Activated CD4-positive, alpha-beta memory T cell treated with anti-CD3 and anti-CD28 coated beads, Interleukin-2, amount 10 ng/mL, durations not matched to agents 7 days and 5 days (primary cell): ENCODE measurements at regions of chr3 and their contacts with region 1.

Region 1: GRCh38 chr3:40452876-40453730 is 4.0 kb upstream of the RPL14 start:
- DNase-seq: peak; percentile 97
- H3K4me3 Mint-ChIP-seq: peak overlapping the region; percentile 86
- H3K27ac Mint-ChIP-seq: peak overlapping the region; percentile 93
- H3K4me1 Mint-ChIP-seq: peaks cover 50% of the 10 kb centered on the region
- H3K27me3 Mint-ChIP-seq: no peaks in the 10 kb centered on the region

Region 2: DNA sequence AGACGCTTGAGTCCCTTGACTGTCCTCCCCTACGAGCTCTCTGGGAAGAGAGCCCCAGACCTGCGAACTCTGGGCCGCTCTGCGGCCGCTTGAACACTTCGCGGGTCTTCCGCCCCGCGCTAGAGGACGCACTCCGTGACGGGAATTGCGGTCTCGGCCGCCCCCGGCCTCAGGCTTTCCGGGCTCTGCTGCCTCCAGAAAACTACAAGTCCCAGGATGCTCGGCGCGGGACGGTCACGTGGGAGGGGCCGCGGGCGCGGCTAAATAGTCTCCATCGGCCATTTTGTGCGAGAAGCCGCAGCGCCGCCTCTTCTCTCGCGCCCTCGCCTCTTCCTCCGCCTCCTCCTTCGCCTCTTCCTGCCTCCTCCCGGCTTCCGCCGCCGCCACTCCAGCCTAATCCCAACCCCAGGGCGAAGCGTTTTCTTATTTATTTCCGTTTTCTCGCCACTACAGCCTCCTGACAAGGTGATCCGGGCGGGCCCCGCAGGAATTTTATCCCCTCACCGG is 143.6 kb before region 1 on chr3 and contains the start of gene EIF1B:
- CTCF ChIA-PET with region 1: interaction called, 4 read pairs
- POLR2A ChIA-PET with region 1: interaction called, 17 read pairs
- DNase-seq: peak; percentile 98
- H3K4me3 Mint-ChIP-seq: peak within 1 kb of the TSS; percentile 98
- H3K27ac Mint-ChIP-seq: peak within 1 kb of the TSS; percentile 94
- H3K4me1 Mint-ChIP-seq: peaks cover 28% of the 10 kb centered on the region
- H3K27me3 Mint-ChIP-seq: no peaks in the 10 kb centered on the region
- total RNA-seq, gene EIF1B: 39.2 to 41.9 TPM

Region 3: GRCh38 chr3:40464339-40465110 is 11.4 kb after region 1 on chr3:
- CTCF ChIA-PET with region 1: interaction called, 3 read pairs
- POLR2A ChIA-PET with region 1: interaction called, 19 read pairs
- DNase-seq: no peak
- H3K4me3 Mint-ChIP-seq: no peak overlapping the region
- H3K27ac Mint-ChIP-seq: peak overlapping the region; percentile 71
- H3K4me1 Mint-ChIP-seq: peaks cover 45% of the 10 kb centered on the region
- H3K27me3 Mint-ChIP-seq: no peaks in the 10 kb centered on the region

Region 4: DNA sequence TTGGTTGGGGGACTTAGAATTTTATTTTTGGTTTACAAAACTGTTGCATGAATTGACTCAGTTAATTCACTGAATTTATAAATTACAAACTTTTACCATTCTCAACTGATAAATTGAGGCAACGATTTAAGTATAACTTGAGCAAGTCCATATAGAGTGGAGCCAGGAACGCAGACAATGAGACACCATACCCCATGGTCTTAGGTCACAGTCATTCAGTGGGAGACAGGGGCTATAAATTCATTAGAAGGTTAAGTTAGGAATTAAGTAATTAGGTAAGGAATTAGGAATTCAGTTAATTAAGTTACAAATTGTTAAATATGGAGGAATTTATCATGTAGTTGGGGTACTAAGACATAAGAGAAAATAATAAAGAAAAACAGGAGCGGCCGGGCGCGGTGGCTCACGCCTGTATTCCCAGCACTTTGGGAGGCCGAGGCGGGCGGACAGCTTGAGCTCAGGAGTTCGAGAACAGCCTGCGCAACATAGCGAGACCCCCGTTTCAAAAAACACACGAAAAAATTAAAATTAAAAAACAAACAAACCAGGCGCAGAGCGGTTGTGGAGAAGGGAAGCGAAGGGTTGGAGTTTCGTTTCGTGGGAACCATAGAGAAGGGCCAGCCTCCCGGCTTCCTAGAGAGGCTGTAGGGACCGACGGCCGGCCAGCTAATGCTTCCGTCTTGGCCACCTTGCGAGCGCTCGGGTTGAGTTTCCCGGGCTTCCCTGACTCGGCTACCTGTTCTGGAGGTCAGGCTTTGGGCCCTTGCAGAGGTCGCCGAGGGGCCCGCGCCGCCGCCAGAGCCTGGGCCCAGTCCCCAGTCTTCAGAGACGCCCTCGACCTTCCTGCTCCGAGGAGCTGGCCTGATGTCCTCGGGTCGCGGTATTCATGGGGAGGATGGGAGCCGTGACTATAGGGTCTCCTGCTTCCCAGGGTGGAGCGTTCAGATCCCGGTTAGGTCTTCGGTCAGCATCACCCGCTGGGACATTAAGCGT is 23.7 kb after region 1 on chr3 and contains the start of gene ZNF619:
- CTCF ChIA-PET with region 1: interaction called, 4 read pairs
- POLR2A ChIA-PET with region 1: interaction called, 29 read pairs
- DNase-seq: peak; percentile 66
- H3K4me3 Mint-ChIP-seq: peak within 1 kb of the TSS; percentile 81
- H3K27ac Mint-ChIP-seq: peak within 1 kb of the TSS; percentile 63
- H3K4me1 Mint-ChIP-seq: peaks cover 25% of the 10 kb centered on the region
- H3K27me3 Mint-ChIP-seq: no peaks in the 10 kb centered on the region
- total RNA-seq, gene ZNF619: 10.5 to 10.6 TPM

Region 5: GRCh38 chr3:40505599-40506462 is 52.7 kb after region 1 on chr3 and contains the start of gene ZNF620:
- CTCF ChIA-PET with region 1: interaction called, 5 read pairs
- POLR2A ChIA-PET with region 1: interaction called, 14 read pairs
- DNase-seq: peak; percentile 48
- H3K4me3 Mint-ChIP-seq: peak within 1 kb of the TSS; percentile 94
- H3K27ac Mint-ChIP-seq: peak within 1 kb of the TSS; percentile 69
- H3K4me1 Mint-ChIP-seq: peaks cover 34% of the 10 kb centered on the region
- H3K27me3 Mint-ChIP-seq: peaks cover 3% of the 10 kb centered on the region
- total RNA-seq, gene ZNF620: 6.1 to 6.3 TPM

Region 6: GRCh38 chr3:40524568-40525285 is 71.6 kb after region 1 on chr3 and contains the start of gene ZNF621:
- CTCF ChIA-PET with region 1: interaction called, 4 read pairs
- POLR2A ChIA-PET with region 1: interaction called, 46 read pairs
- DNase-seq: peak; percentile 87
- H3K4me3 Mint-ChIP-seq: peak within 1 kb of the TSS; percentile 94
- H3K27ac Mint-ChIP-seq: peak within 1 kb of the TSS; percentile 84
- H3K4me1 Mint-ChIP-seq: peaks cover 32% of the 10 kb centered on the region
- H3K27me3 Mint-ChIP-seq: no peaks in the 10 kb centered on the region
- total RNA-seq, gene ZNF621: 24.9 to 25.7 TPM

Region 7: DNA sequence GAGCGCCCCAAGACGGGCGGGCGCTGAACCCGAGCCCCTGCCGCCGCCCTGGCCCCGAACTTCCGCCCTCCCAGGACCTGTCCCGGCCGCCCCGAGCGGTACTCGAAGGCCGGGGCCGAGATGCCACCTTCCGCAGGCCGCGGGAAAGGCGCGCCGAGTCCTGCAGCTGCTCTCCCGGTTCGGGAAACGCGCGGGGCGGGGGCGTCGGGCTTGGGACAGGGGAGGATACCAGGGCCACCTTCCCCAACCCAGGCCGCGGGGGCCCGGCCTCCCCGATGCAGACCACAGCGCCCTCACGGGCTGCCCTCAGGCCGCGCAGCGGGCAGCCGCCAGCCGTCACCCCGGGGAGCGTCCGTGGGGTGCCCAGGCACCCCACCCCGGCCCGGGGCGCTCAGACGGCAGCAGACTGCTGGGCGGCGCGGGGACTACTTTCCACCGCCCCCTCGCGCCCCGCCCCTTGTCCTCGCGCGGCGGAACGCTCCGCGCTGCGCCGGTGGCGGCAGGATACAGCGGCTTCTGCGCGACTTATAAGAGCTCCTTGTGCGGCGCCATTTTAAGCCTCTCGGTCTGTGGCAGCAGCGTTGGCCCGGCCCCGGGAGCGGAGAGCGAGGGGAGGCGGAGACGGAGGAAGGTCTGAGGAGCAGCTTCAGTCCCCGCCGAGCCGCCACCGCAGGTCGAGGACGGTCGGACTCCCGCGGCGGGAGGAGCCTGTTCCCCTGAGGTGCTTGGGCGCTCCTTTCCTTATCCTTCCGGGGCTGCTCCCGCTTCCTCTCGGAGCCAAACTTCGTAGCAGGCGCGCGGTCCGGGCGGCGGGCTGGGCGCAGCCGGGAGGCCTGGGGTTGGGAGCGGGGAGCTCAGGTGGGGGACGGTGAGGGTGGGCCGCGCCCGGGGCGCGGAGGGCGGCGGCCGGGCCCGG is 746.1 kb after region 1 on chr3 and contains the start of gene CTNNB1:
- CTCF ChIA-PET with region 1: no interaction called
- POLR2A ChIA-PET with region 1: interaction called, 12 read pairs
- DNase-seq: peak; percentile 91
- H3K4me3 Mint-ChIP-seq: peak within 1 kb of the TSS; percentile 98
- H3K27ac Mint-ChIP-seq: peak within 1 kb of the TSS; percentile 94
- H3K4me1 Mint-ChIP-seq: peaks cover 36% of the 10 kb centered on the region
- H3K27me3 Mint-ChIP-seq: peaks cover 21% of the 10 kb centered on the region
- total RNA-seq, gene CTNNB1: 134 to 151 TPM